Activated B cell treated with CpG ODN at 0.5 μM for 24 hours (primary cell): ENCODE measurements at regions of chr9 and their contacts with region 1.

Region 1: GRCh38 chr9:72154468-72155281 is 5.4 kb downstream of the GDA start:
- DNase-seq: no peak
- ATAC-seq: peak; percentile 85
- H3K4me3 Mint-ChIP-seq: peak overlapping the region; percentile 12
- H3K27ac Mint-ChIP-seq: peak overlapping the region; percentile 83
- H3K4me1 Mint-ChIP-seq: peaks cover 21% of the 10 kb centered on the region
- H3K27me3 Mint-ChIP-seq: peaks cover 13% of the 10 kb centered on the region
- CTCF ChIP-seq: no peak

Region 2: GRCh38 chr9:71891557-71892189 is 263.0 kb before region 1 on chr9:
- CTCF ChIA-PET with region 1: no interaction called
- POLR2A ChIA-PET with region 1: no interaction called
- intact Hi-C with region 1: no loop called
- DNase-seq: no peak
- ATAC-seq: peak; percentile 54
- H3K4me3 Mint-ChIP-seq: peak overlapping the region; percentile 17
- H3K27ac Mint-ChIP-seq: peak overlapping the region; percentile 21
- H3K4me1 Mint-ChIP-seq: peaks cover 75% of the 10 kb centered on the region
- H3K27me3 Mint-ChIP-seq: no peaks in the 10 kb centered on the region
- CTCF ChIP-seq: no peak

Region 3: GRCh38 chr9:72203205-72203803 is 48.6 kb after region 1 on chr9:
- CTCF ChIA-PET with region 1: no interaction called
- POLR2A ChIA-PET with region 1: no interaction called
- intact Hi-C with region 1: loop called (anchors 5 kb)
- DNase-seq: no peak
- ATAC-seq: no peak
- H3K4me3 Mint-ChIP-seq: no peak overlapping the region
- H3K27ac Mint-ChIP-seq: no peak overlapping the region
- H3K4me1 Mint-ChIP-seq: peaks cover 2% of the 10 kb centered on the region
- H3K27me3 Mint-ChIP-seq: no peaks in the 10 kb centered on the region
- CTCF ChIP-seq: no peak

Region 4: DNA sequence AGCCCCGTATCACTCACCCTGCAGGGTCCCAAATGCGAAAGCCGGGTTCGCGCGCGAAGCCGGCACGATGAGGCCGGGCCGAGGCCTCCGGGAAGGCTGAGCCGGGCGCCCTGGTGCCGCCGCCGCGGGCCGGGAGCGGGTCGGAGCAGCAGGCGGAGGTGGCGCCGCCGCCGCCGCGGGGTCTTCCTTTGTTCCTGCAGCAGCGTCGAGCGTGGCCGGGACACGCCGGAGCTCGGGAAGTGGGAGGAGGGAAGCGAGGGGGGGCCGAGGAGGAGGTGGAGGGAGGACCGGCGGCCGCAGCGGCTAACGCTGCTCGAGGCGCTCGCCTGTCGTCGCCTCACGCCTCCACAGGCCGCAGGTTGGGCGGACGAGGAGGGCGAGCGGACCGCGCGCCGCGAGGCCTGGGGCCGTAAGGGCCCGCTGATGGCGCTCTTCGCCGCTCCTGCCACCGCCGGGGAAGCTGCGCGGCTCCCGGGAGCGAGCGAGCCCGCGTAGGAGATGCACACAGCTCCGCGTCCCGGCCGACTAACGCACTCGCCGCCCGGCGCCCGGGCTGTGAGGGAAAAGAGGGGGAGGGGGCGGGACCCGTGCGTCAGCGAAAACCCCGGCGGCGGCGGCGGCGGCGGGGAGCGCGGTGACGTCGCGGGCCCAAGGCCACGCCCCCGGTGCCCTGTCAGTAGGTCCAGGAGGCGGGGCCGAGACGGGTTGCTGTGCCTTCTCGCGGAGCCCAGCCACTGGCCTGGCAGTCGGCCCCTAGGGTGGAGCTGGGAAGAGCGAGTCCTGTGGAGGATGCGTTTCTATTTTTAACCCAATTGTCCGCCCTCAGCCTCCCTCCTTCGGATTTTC is 210.2 kb after region 1 on chr9 and contains the start of gene ZFAND5:
- CTCF ChIA-PET with region 1: no interaction called
- POLR2A ChIA-PET with region 1: no interaction called
- intact Hi-C with region 1: no loop called
- DNase-seq: peak; percentile 89
- ATAC-seq: peak; percentile 80
- H3K4me3 Mint-ChIP-seq: peak within 1 kb of the TSS; percentile 96
- H3K27ac Mint-ChIP-seq: peak within 1 kb of the TSS; percentile 98
- H3K4me1 Mint-ChIP-seq: peaks cover 40% of the 10 kb centered on the region
- H3K27me3 Mint-ChIP-seq: no peaks in the 10 kb centered on the region
- CTCF ChIP-seq: no peak
- total RNA-seq, gene ZFAND5: 79.2 and 79.5 TPM in 2 replicates